ENCODE measurements at regions of chr20 and their contacts with region 1.

Region 1: DNA sequence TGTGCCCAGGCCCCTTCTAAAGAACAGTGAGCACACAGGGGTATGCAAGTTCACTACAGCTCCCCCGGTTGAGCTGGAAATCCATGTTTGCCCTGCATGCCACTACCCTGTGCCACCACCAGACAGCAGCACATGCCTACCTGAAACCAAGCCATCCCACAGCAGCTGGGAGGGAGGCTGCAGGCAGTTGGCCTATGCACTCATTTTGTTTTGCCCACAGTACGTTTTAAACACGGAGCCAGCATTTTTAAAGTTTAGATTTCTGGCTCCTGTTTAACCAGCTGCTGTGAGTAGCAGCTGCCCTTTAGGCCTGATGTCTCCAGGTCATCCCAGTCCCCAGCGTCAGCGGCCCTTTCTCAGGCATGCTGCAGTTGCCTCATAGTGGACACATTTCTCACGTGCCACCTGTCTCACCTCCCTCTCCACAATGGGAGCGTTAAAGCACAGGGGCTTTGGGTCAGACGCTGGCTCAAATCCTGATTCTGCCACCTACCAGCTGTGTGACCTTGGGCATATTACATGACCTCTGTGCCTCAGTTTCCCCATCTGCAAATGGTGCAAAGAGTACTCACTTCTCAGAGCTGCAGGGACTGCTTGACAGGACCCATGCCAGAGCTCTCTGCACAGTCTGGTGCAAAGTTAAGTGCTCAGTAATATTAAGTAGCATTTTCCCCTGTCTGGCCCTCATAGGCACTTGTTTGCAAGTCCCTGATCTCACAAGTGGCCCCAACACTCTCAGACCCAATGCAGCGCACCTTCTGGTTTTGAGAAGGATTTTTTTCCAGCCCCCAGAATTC is 8.1 kb upstream of the UBE2V1 start:
- DNase-seq: peak; percentile 86 to 87
- H3K4me3 ChIP-seq: no peak overlapping the region
- H3K27ac ChIP-seq: peak overlapping the region in 2 of 3 donors; percentile 27 to 73
- H3K4me1 ChIP-seq: peaks cover 21 to 26% of the 10 kb centered on the region in 2 donors
- H3K27me3 ChIP-seq: no peaks in the 10 kb centered on the region
- CTCF ChIP-seq: peak; percentile 12 to 94 (median 85)
- POLR2A ChIP-seq: peak in 1 of 2 donors; percentile 8

Region 2: DNA sequence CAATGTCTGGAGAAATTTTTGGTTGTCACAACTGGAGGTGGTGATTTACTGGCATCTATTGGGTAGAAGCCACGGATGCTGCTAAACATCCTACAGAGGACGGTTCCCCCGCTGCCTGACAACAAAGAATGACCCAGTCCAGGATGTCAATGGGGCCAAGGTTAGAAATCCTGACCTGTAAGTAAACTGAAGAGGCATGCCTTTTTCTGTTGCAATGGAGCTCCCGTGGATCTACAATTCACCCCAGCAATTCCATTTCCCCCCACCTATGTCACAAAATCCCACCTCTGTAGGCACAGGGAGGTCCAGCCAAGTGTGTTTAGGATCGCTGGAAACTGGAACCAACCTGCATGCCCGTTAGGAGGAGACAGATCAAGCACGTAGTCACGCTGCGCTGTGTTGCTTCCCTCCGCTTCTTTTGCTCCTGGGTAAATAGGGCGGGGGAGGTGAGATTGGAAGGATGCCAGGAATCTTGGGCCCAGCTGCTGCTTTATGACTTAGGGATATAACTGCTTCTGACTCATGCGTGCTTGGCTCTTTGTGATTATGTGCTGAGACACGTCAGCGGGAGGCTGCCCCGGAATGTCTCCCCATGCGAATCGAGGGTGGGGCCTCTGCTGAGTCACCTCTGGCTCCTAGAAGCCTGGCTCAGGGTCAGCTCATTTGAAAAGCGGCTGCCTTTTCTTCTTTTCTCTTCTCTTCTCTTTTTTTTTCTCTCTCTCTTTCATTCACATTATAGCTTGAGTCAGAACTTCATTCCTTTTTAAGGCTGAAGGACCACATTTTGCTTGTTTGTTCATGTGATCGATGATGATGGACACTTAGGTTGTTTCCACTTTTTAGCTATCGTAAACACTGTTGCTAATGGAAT is 44.8 kb after region 1 on chr20:
- intact Hi-C with region 1: loop called (anchors 5 kb)
- DNase-seq: peak; percentile 99
- H3K4me3 ChIP-seq: peak overlapping the region in 2 of 3 donors; percentile 11 to 12
- H3K27ac ChIP-seq: peak overlapping the region; percentile 88 to 96 (median 93)
- H3K4me1 ChIP-seq: peaks cover 15 to 23% of the 10 kb centered on the region in 2 donors
- H3K27me3 ChIP-seq: no peaks in the 10 kb centered on the region
- CTCF ChIP-seq: no peak
- POLR2A ChIP-seq: peak in 1 of 2 donors; percentile 75

Measured in thyroid gland (tissue), 4 donors.